Sigmoid colon (tissue), 7 donors: ENCODE measurements at regions of chr12 and their contacts with region 1.

Region 1: DNA sequence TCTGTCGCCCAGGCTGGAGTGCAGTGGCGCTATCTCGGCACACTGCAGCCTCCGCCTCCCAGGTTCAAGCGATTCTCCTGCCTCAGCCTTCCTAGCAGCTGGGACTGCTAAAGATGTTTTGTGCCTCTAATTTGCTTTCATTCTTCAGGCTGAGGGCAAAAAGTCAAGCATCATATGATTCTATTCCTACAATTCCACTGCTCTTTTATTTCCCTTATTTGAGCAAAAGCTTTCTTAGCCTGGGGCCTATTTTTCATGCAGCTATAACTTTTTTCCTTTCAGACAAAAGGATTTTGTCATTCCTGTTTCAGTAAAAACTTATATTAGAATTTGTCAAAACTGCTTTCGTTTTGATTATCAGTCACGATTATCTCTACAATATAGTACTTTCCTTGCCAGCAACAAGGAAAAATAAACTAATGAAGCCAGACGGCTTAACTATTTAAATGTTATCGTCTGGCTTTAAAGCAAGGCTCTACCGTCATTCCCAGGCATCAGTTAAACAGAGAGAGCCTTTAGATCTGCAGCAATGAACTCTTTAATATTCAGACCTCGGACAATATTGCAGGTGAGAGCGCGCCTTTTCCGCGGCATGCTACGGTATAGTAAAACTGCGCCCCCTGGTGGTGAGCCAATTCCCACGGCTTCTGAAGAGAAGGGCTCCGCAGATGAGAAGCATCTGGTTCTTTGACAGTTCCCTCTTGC is 1.4 kb upstream of the SLC2A13 start:
- DNase-seq: peak; percentile 95
- H3K4me3 ChIP-seq: peak overlapping the region; percentile 13 to 100 (median 72)
- H3K27ac ChIP-seq: peak overlapping the region; percentile 83 to 95 (median 91)
- H3K4me1 ChIP-seq: peaks cover 0 to 40% (median 30%) of the 10 kb centered on the region in 4 donors
- H3K27me3 ChIP-seq: no peaks in the 10 kb centered on the region
- CTCF ChIP-seq: peak; percentile 71 to 89 (median 86)
- EP300 ChIP-seq: no peak
- POLR2A ChIP-seq: no peak

Region 2: DNA sequence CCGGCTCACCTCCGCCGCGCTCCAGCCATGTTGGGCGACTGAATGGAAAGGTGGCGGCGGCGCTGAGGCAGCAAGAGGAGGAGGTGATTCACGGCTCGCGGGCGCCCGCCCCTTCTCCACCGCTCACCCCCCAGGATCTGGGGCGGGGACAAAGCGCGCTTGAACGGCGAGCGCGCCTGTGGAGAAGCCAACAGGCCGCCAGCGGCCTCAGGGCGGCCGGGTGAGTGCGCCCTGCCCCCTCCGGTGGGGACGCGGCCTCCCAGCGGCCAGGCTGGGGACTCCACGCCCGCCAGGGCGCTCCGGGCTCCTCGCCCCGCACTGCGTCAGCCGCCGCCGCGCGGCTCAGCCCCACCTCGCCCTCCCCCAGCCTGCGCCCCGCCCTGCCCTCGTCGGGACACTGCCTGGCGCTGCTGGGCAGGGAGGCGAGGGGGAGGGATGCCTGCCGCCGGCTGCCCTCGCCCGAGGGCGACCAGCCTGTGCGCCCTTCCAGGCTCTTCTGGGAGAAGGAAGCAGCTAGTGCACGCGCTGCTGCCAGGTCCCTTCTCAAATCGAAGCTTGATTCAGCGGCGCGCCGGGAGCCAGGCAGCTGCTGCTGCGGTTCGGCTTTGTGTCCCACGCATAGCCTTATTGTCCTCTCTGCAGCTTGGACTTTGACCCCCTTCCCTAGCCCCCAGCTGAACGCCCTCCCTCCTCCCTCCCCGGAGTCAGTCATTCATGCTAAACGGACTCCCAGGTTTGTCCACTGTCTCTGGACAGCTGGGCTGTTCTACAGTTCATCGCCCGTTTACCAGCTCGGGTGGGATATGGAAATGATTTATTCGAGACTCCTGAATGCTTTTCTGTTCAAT is 663.9 kb before region 1 on chr12 and contains the start of gene KIF21A:
- intact Hi-C with region 1: loop called (anchors 10 kb)
- DNase-seq: peak; percentile 92
- H3K4me3 ChIP-seq: peak within 1 kb of the TSS; percentile 61 to 85 (median 73)
- H3K27ac ChIP-seq: peak within 1 kb of the TSS; percentile 82 to 90 (median 84)
- H3K4me1 ChIP-seq: peaks cover 0 to 18% (median 10%) of the 10 kb centered on the region in 4 donors
- H3K27me3 ChIP-seq: no peaks in the 10 kb centered on the region
- CTCF ChIP-seq: peak; percentile 6 to 74 (median 20)
- EP300 ChIP-seq: no peak
- POLR2A ChIP-seq: peak in 1 of 2 donors; percentile 28
- total RNA-seq, gene KIF21A: 12.0 to 23.9 (median 17.3) TPM

Region 3: GRCh38 chr12:39764944-39765560 is 342.2 kb before region 1 on chr12:
- intact Hi-C with region 1: loop called (anchors 1 kb)
- DNase-seq: no peak
- H3K4me3 ChIP-seq: no peak overlapping the region
- H3K27ac ChIP-seq: no peak overlapping the region
- H3K4me1 ChIP-seq: peaks cover 0 to 6% (median 0%) of the 10 kb centered on the region in 4 donors
- H3K27me3 ChIP-seq: no peaks in the 10 kb centered on the region
- CTCF ChIP-seq: peak; percentile 64 to 81 (median 74)
- EP300 ChIP-seq: no peak
- POLR2A ChIP-seq: no peak

Region 4: DNA sequence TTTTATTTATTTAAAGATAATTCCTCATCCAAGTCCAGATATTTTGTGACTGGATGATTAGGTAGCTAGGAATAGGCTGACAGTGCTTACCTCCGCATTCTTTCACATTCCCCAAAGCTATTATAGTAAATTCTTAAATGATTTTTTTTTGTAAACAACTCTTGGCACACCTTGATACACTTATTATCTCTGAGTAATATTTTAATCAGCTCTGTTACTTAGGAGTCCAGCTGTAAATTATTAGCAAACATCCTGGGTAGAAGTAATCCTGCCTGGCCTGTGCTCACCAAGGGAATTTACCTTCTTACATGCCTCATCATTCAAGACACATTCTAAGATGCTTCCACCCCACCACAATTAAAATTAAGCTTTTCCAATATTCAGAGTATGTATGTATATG is 187.5 kb before region 1 on chr12:
- intact Hi-C with region 1: loop called (anchors 10 kb)
- DNase-seq: no peak
- H3K4me3 ChIP-seq: no peak overlapping the region
- H3K27ac ChIP-seq: no peak overlapping the region
- H3K4me1 ChIP-seq: peaks cover 0 to 5% (median 0%) of the 10 kb centered on the region in 4 donors
- H3K27me3 ChIP-seq: no peaks in the 10 kb centered on the region
- CTCF ChIP-seq: no peak
- EP300 ChIP-seq: no peak
- POLR2A ChIP-seq: no peak

Region 5: DNA sequence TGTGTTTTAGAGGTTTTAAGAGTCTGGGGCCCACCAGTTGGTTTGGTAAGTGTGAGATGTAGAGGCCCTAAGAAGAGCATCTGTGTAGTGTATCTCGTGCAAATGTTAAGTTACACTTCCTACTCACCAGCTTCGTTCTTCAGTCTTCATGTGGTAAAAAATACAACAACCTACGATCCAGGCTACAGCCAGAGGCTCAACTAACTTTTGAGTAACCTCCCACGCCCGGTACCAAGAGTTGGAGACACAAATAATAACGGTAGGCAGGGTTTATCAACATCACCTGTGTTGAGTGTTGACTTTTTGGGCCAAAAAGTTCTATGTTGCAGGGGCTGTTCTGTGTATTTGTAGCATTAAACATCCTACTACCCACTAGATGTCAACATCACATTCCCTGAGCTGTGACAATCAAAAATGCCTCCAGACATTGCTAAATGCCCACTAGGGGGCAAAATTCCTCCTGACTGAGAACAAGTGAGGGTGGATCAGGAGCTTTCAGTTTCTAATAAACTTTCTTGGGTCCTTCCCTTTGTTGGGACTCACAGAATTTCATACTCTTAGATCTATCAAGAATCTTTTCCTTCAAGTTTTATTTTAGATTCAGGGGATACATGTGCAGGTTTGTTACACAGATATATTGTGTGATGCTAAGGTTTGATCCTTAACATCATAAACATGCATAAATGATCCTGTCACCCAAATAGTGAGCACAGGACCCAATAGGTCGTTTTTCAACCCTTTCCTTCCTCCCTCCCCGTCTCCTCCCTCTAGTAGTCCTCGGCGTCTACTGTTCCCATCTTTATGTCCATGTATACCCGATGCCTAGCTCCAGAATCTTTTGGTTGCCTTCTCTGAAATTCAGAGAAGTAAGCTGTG is 96.1 kb before region 1 on chr12:
- intact Hi-C with region 1: loop called (anchors 1 kb)
- DNase-seq: peak; percentile 66
- H3K4me3 ChIP-seq: peak overlapping the region in 2 of 4 donors; percentile 7 to 25
- H3K27ac ChIP-seq: peak overlapping the region in 1 of 4 donors; percentile 17
- H3K4me1 ChIP-seq: peaks cover 0 to 20% (median 16%) of the 10 kb centered on the region in 4 donors
- H3K27me3 ChIP-seq: no peaks in the 10 kb centered on the region
- CTCF ChIP-seq: peak; percentile 43 to 75 (median 55)
- EP300 ChIP-seq: no peak
- POLR2A ChIP-seq: no peak

Region 6: DNA sequence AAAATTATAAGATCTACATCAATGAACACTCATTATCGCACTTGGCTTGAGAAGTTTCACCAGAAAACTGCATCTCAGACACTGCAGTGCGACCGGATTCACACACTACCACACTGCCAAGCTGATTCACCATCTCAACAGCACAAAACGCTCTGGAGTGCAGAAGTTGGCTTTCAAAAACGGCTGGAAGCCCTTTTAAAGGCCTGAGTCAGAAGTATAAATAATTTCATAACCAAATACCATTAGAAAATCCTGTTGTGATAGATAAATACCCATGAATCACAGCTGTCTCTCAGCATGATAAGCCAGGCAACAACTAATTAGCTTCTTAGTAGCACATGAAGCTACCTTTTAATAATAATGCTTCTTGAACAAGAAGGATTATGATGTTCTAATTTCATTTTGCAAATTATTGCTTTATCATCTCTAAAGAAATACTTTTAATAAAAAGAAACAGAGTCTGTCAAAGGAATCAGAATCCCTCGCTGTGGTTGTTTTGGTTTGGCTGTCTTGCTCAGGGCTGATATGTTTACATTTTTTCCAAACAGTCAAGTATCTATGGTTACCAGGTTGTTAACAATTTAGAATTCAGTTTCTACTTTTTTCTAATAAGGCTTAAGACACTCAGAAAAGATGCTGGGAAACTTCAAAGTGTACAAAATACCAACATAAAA is 52.6 kb before region 1 on chr12:
- intact Hi-C with region 1: loop called (anchors 5 kb)
- DNase-seq: peak; percentile 74
- H3K4me3 ChIP-seq: peak overlapping the region in 3 of 4 donors; percentile 19 to 29 (median 21)
- H3K27ac ChIP-seq: peak overlapping the region; percentile 63 to 79 (median 75)
- H3K4me1 ChIP-seq: peaks cover 0 to 61% (median 34%) of the 10 kb centered on the region in 4 donors
- H3K27me3 ChIP-seq: no peaks in the 10 kb centered on the region
- CTCF ChIP-seq: no peak
- EP300 ChIP-seq: no peak
- POLR2A ChIP-seq: no peak